CD8-positive, alpha-beta T cell (primary cell): ENCODE measurements at regions of chr14 and their contacts with region 1.

Region 1: DNA sequence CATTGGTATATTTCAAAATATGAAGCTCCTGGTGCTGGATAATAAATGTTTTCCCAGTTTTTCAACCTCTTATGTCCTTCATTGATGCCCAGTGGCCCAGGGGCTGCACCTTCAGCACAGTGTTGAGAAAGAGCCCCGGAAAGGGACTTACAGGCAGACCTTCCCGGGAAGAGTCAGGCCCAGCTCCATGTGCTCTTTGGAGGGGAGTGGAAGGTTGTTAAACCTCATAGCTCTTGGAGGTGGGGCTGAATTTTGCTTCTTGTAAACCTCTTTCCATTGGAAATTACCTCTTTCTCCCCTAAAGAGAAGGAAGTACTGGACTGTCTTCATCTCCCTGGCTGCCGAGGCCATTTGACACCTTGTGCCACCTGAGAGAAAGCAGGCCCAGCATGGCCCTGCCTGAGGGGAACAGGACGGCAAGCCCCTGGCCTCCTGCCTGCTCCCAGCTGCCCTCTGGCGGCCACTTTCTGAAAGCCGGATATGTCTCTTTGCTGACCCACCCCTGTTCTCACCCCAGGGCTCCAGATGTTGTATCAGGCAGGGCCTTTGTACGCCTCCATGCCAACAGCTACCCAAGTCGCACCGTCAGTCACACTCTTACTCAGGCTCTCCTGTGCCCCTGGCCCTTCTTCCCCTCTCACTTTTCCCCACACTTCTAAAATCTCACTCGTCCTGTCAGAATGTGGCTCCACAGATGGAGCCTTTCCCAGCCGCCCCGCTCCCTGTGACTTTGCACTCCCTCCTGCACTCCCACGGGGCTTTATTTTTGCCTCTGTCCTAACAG is 43.0 kb downstream of the EVL start:
- DNase-seq: peak; percentile 80 to 93 (median 88)
- ATAC-seq: peak; percentile 50
- H3K4me3 ChIP-seq: no peak overlapping the region
- H3K4me3 Mint-ChIP-seq: peak overlapping the region; percentile 49
- H3K27ac ChIP-seq: peak overlapping the region; percentile 21 to 59
- H3K27ac Mint-ChIP-seq: peak overlapping the region; percentile 99
- H3K4me1 ChIP-seq: peaks cover 83% of the 10 kb centered on the region
- H3K4me1 Mint-ChIP-seq: peaks cover 88% of the 10 kb centered on the region
- H3K27me3 ChIP-seq: no peaks in the 10 kb centered on the region
- H3K27me3 Mint-ChIP-seq: no peaks in the 10 kb centered on the region
- CTCF ChIP-seq: peak; percentile 83

Region 2: GRCh38 chr14:99320105-99320572 is 788.1 kb before region 1 on chr14:
- CTCF ChIA-PET with region 1: no interaction called
- POLR2A ChIA-PET with region 1: no interaction called
- intact Hi-C with region 1: no loop called
- DNase-seq: peak; percentile 44 to 88 (median 67)
- ATAC-seq: peak; percentile 79
- H3K4me3 ChIP-seq: peak overlapping the region in 1 of 2 experiments; percentile 35
- H3K4me3 Mint-ChIP-seq: peak overlapping the region; percentile 11
- H3K27ac ChIP-seq: peak overlapping the region in 1 of 2 experiments; percentile 44
- H3K27ac Mint-ChIP-seq: no peak overlapping the region
- H3K4me1 ChIP-seq: no peaks in the 10 kb centered on the region
- H3K4me1 Mint-ChIP-seq: peaks cover 7% of the 10 kb centered on the region
- H3K27me3 ChIP-seq: no peaks in the 10 kb centered on the region
- H3K27me3 Mint-ChIP-seq: no peaks in the 10 kb centered on the region
- CTCF ChIP-seq: peak; percentile 84

Region 3: DNA sequence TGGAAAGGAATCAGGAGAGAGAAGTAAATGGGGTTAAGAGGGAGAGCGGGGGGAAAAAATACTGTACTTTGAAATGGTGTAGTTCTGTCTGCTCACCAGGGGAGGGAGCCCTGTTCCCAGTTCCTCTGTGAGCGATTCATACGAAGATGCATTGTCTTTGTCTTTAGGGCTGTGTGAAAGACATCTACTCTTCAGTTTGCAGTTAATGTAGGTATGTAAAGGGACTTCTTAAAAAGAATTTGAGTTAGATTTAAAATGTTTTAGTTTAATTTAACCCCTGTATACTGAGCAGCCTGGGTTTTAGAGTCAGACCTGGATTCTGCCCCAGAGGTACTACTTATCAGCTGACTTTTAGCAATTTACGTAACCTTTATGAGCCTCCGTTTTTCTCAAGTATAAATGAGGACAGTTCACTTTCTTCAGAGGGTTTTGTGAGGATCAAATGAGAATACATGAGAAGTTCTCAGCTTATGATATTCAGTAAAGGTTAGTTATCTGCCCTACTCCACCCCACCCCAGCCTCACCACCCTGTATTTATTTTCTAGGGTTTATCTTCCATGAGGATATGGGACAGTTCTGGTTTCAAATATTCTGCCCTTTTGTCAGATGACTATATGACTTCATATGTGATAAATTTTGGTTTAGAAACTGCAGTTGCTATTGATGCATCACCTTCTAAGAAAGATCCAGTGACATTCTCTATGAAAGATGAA is 125.5 kb before region 1 on chr14:
- CTCF ChIA-PET with region 1: interaction called, 10 read pairs
- POLR2A ChIA-PET with region 1: no interaction called
- intact Hi-C with region 1: loop called (anchors 1 kb)
- DNase-seq: peak; percentile 30 to 85 (median 65)
- ATAC-seq: peak; percentile 100
- H3K4me3 ChIP-seq: no peak overlapping the region
- H3K4me3 Mint-ChIP-seq: no peak overlapping the region
- H3K27ac ChIP-seq: no peak overlapping the region
- H3K27ac Mint-ChIP-seq: no peak overlapping the region
- H3K4me1 ChIP-seq: peaks cover 10% of the 10 kb centered on the region
- H3K4me1 Mint-ChIP-seq: peaks cover 12% of the 10 kb centered on the region
- H3K27me3 ChIP-seq: no peaks in the 10 kb centered on the region
- H3K27me3 Mint-ChIP-seq: no peaks in the 10 kb centered on the region
- CTCF ChIP-seq: peak; percentile 95

Region 4: DNA sequence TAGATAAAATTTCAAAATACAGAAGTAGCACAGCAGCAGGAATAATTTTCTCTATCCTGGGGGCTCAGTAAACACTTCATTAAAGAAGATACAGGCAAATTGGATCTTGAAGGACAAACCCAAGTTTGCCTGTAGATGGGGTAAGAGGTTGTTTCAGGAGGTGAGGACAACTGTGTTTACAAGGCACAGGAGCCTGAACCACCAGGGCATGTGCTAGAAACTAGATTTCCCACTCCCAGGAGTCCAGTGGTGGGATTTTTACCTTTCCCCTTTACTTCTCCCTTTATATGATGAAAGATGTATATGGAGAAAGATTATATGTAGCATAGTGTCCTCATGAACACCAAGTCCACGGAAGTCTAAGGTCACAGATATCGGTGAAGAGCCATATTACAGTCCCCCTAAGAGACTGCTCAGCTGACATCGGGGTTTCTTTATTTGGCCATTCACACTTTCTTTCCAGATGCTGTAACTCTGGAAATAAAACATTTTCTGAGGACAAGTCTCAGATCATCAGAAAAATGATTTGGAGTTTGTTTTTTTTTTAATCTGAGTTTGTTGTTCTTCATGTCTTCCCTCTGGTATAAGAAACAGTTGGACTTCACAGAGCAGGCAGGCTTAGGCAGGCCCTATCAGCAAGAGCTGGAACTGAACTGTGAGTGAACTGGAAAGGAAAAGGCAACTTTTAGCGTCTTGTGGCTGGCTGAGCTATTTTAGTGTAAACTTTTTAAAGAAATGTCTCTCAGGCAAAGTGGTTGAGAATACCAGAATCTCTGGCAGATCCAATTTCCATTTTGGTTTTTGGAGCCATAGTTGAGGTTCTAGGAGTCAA is 51.1 kb before region 1 on chr14:
- CTCF ChIA-PET with region 1: interaction called, 1,143 read pairs
- POLR2A ChIA-PET with region 1: interaction called, 8 read pairs
- intact Hi-C with region 1: loop called (anchors 1 kb)
- DNase-seq: peak in 4 of 9 experiments; percentile 35 to 84 (median 62)
- ATAC-seq: peak; percentile 71
- H3K4me3 ChIP-seq: no peak overlapping the region
- H3K4me3 Mint-ChIP-seq: peak overlapping the region; percentile 21
- H3K27ac ChIP-seq: peak overlapping the region in 1 of 2 experiments; percentile 12
- H3K27ac Mint-ChIP-seq: peak overlapping the region; percentile 94
- H3K4me1 ChIP-seq: peaks cover 57% of the 10 kb centered on the region
- H3K4me1 Mint-ChIP-seq: peaks cover 54% of the 10 kb centered on the region
- H3K27me3 ChIP-seq: no peaks in the 10 kb centered on the region
- H3K27me3 Mint-ChIP-seq: no peaks in the 10 kb centered on the region
- CTCF ChIP-seq: peak; percentile 77

Region 5: GRCh38 chr14:100078991-100079725 is 29.1 kb before region 1 on chr14:
- CTCF ChIA-PET with region 1: interaction called, 1,143 read pairs
- POLR2A ChIA-PET with region 1: interaction called, 700 read pairs
- intact Hi-C with region 1: no loop called
- DNase-seq: peak; percentile 74 to 95 (median 88)
- ATAC-seq: peak; percentile 66
- H3K4me3 ChIP-seq: peak overlapping the region; percentile 27
- H3K4me3 Mint-ChIP-seq: peak overlapping the region; percentile 77
- H3K27ac ChIP-seq: peak overlapping the region; percentile 55 to 63
- H3K27ac Mint-ChIP-seq: peak overlapping the region; percentile 99
- H3K4me1 ChIP-seq: peaks cover 95% of the 10 kb centered on the region
- H3K4me1 Mint-ChIP-seq: peaks cover 97% of the 10 kb centered on the region
- H3K27me3 ChIP-seq: no peaks in the 10 kb centered on the region
- H3K27me3 Mint-ChIP-seq: no peaks in the 10 kb centered on the region
- CTCF ChIP-seq: no peak

Region 6: DNA sequence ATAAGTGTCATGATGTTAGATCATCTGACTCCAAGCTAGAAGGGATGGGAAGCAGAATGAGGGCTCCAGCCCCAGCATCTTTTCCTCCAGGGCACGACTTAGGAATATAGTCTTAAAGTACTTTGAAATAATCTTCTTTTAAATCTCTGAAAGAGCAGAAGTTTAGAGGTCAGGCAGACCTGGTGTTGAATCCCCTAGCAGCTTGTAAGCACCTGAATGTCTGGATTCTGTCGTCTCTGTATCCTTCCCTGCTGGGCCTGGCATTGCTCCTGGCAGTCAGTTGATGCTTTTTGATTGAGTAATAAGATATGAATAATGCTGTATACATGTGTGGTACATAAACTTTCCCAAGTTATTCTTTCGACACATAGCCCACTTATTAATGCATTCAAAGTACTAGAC is 11.7 kb before region 1 on chr14:
- CTCF ChIA-PET with region 1: interaction called, 144 read pairs
- POLR2A ChIA-PET with region 1: interaction called, 5 read pairs
- intact Hi-C with region 1: no loop called
- DNase-seq: no peak
- ATAC-seq: no peak
- H3K4me3 ChIP-seq: no peak overlapping the region
- H3K4me3 Mint-ChIP-seq: peak overlapping the region; percentile 33
- H3K27ac ChIP-seq: peak overlapping the region in 1 of 2 experiments; percentile 12
- H3K27ac Mint-ChIP-seq: peak overlapping the region; percentile 96
- H3K4me1 ChIP-seq: peaks cover 98% of the 10 kb centered on the region
- H3K4me1 Mint-ChIP-seq: peaks cover 94% of the 10 kb centered on the region
- H3K27me3 ChIP-seq: no peaks in the 10 kb centered on the region
- H3K27me3 Mint-ChIP-seq: no peaks in the 10 kb centered on the region
- CTCF ChIP-seq: no peak

Region 7: DNA sequence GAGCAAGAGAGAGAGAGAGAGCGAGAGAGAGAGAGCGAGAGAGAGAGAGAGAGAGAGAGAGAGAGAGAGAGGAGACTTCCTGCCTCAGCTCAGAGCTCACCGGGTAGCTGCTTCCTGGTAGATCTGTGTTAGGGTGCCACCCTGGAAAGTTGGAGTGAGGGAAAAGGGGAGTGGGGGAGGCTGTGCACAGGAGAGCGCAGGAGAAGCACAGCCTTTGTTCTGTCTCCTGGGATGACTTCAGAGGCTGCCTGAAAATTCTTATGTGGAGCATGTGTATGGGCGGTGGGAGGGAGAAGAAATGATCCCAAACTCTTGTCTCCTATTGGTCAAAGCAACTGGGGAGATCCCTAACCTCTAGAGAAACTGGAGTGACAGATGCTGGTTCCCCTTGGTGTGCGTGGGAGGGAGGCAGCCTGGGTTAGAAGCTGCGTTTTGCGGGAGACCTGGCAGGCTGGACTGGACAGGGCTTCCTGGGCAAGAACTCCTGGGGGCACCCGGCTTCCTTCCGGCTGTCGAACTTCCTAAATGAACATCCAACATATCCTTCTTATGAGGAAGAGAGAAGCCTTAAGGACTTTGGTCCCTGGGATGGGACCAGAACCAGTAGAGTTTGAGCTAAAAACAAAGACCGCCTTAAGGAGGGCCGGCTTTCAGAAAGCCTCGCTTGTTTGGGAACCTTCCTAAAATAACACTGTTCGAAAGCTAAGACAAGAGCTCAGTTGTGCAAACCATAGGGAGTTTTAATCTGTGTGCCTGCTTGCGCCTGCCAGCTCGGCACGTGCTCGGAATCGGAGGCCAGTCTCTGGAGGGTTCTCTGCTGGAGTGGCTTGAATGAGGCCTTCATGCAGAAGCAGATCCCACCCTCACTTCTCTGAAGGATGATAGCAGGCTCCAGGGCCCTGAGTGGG is 509.4 kb after region 1 on chr14:
- CTCF ChIA-PET with region 1: no interaction called
- POLR2A ChIA-PET with region 1: no interaction called
- intact Hi-C with region 1: no loop called
- DNase-seq: peak in 2 of 9 experiments; percentile 48 to 67
- ATAC-seq: no peak
- H3K4me3 ChIP-seq: no peak overlapping the region
- H3K4me3 Mint-ChIP-seq: peak overlapping the region; percentile 27
- H3K27ac ChIP-seq: no peak overlapping the region
- H3K27ac Mint-ChIP-seq: peak overlapping the region; percentile 67
- H3K4me1 ChIP-seq: peaks cover 22% of the 10 kb centered on the region
- H3K4me1 Mint-ChIP-seq: peaks cover 20% of the 10 kb centered on the region
- H3K27me3 ChIP-seq: peaks cover 0 to 3% of the 10 kb centered on the region in 2 experiments
- H3K27me3 Mint-ChIP-seq: peaks cover 6% of the 10 kb centered on the region
- CTCF ChIP-seq: no peak